ENCODE measurements at regions of chr2 and their contacts with region 1.

Region 1: DNA sequence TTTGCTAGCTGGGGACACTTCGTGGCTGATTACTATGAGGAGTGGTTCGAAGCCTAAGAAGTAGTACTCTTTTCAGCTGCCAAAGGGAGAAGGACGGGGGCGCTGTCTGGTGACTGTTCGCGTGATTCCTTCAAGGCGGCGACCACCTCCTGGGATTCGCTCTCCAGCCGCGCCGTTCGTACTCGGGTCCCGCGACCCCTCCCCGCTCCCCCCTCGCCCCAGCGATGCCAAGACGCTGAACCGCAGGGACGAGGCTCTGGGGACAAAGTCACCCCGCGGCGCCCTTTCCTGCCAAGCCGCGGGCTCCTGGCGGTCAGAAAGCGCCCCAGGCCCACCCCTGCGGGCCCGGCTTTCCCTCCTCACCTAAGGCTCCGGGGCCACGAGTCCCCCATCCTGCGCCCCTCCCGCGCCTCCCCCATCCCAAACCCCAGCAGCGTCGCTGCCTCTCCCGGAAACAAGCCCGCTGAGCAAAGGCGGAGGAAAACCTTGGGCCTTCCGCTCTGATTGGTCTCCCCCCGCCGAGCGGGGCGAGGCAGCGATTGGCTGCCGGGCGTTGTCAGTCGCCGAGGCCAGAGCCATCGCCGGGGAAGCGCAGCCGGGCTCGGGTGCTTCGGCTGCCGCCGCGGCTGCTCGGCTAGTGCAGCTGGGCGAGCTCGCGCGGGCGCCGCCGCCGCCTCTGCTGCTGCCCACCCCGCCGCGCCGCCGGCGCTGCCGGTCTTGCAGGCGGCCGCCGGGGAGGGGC is 404.3 kb downstream of the XIRP2 start:
- DNase-seq: peak; percentile 76
- H3K4me3 Mint-ChIP-seq: peak within 1 kb of the TSS; percentile 75
- H3K27ac Mint-ChIP-seq: no peak within 1 kb of the TSS
- H3K4me1 Mint-ChIP-seq: peaks cover 12% of the 10 kb centered on the region
- H3K27me3 Mint-ChIP-seq: peaks cover 38% of the 10 kb centered on the region

Region 2: GRCh38 chr2:166031054-166031453 is 1261.5 kb before region 1 on chr2:
- CTCF ChIA-PET with region 1: no interaction called
- intact Hi-C with region 1: no loop called
- DNase-seq: no peak
- H3K4me3 Mint-ChIP-seq: no peak overlapping the region
- H3K27ac Mint-ChIP-seq: no peak overlapping the region
- H3K4me1 Mint-ChIP-seq: no peaks in the 10 kb centered on the region
- H3K27me3 Mint-ChIP-seq: peaks cover 5% of the 10 kb centered on the region

Region 3: DNA sequence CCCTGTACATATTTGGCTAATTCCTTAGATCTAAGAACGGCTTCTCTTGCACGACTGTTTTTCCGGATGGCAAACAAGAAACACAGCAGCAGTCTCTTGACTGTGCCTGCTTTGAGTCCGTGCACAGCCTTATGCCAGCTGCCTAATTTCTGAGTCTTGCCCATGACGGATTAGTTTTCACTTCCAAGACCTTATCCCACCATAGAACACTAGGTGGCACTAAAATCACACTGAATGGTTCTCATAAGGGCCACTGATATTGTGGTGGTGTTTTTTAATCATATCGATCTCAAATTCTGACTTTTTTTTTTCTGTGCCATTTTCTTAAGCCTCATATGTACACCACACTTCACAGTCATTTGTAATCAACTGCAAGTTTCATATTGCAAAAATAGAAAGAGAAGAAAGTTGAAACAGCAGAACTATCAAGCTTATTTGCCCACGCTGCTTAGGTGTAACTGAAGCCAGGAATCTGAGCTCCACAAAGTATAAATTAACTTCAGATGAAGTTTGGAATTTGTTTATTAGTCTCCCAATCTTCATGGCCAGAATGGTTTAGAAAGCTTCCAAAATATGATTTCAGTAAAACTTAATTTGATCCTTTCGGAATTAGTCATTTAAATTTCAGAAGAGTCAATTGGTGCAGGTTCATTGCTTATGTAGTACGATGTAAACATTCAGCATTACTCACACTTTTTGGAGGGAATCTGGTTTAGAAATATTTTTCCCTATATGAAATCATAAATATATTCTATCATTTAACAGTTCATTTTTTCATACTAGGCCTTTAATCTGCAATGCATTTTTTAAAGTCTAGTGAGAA is 753.0 kb before region 1 on chr2:
- CTCF ChIA-PET with region 1: no interaction called
- intact Hi-C with region 1: loop called (anchors 5 kb)
- DNase-seq: peak; percentile 21
- H3K4me3 Mint-ChIP-seq: no peak overlapping the region
- H3K27ac Mint-ChIP-seq: no peak overlapping the region
- H3K4me1 Mint-ChIP-seq: no peaks in the 10 kb centered on the region
- H3K27me3 Mint-ChIP-seq: peaks cover 12% of the 10 kb centered on the region

Region 4: GRCh38 chr2:167212014-167212648 is 80.5 kb before region 1 on chr2:
- CTCF ChIA-PET with region 1: no interaction called
- intact Hi-C with region 1: no loop called
- DNase-seq: peak; percentile 41
- H3K4me3 Mint-ChIP-seq: no peak overlapping the region
- H3K27ac Mint-ChIP-seq: no peak overlapping the region
- H3K4me1 Mint-ChIP-seq: no peaks in the 10 kb centered on the region
- H3K27me3 Mint-ChIP-seq: no peaks in the 10 kb centered on the region

Region 5: GRCh38 chr2:167331636-167332232 is 39.1 kb after region 1 on chr2:
- CTCF ChIA-PET with region 1: no interaction called
- intact Hi-C with region 1: no loop called
- DNase-seq: peak; percentile 6
- H3K4me3 Mint-ChIP-seq: no peak overlapping the region
- H3K27ac Mint-ChIP-seq: no peak overlapping the region
- H3K4me1 Mint-ChIP-seq: no peaks in the 10 kb centered on the region
- H3K27me3 Mint-ChIP-seq: peaks cover 3% of the 10 kb centered on the region